ENCODE measurements at regions of chr15 and their contacts with region 1.

Region 1: DNA sequence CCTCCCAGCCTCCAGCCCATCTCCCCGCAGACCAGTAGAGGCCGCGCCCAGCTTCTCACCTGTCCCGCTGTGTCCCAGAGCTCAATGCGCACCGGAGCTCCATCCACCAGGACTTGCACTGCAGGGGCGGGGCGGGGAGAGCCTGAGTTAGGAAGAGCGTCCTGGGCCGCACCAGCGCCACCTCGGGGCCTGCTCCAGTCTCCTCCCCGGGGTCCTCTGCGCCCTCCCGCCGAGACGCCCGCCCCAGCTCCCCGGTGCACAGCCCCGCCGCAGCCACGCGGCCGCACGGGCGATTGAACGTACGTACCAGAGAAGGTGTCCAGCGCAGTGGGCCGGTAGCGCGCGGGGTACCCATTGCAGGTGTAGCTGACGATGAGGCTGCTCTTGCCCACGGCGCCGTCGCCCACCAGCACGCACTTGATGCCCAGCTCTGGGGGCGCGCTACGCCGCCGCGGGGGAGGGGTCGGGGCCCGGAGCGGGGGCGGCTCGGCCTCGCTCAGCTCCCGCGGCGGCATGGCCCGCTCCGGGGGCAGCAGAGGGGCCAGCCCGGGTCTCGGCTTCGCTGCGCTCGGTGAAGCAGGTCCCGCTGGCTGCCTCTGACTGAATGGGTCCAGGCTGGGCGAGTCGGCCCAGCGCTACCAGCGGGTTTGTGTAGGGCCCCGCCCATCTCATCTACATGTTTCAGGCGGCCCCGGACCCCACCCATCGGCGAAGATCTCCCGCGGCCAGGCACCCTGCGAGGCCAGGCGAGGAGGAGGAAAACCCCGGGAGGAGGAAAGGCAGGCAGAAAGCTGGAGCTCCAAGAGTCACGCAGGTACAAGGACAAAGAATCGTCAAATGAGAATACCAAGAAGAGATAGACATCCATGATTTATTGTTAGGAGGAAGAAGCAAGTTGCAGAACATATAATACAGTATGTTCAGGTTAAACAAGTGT is at the start of gene RHOV:
- DNase-seq: peak; percentile 89
- ATAC-seq: peak; percentile 90
- H3K4me3 ChIP-seq: peak within 1 kb of the TSS; percentile 92
- H3K27ac ChIP-seq: peak within 1 kb of the TSS; percentile 95
- H3K4me1 ChIP-seq: peaks cover 36% of the 10 kb centered on the region
- H3K27me3 ChIP-seq: no peaks in the 10 kb centered on the region
- CTCF ChIP-seq: peak; percentile 63
- total RNA-seq, gene RHOV: 39.5 and 52.2 TPM in 2 replicates

Region 2: GRCh38 chr15:40716165-40716564 is 157.7 kb before region 1 on chr15:
- CTCF ChIA-PET with region 1: no interaction called
- POLR2A ChIA-PET with region 1: no interaction called
- intact Hi-C with region 1: no loop called
- DNase-seq: no peak
- ATAC-seq: no peak
- H3K4me3 ChIP-seq: no peak overlapping the region
- H3K27ac ChIP-seq: no peak overlapping the region
- H3K4me1 ChIP-seq: no peaks in the 10 kb centered on the region
- H3K27me3 ChIP-seq: no peaks in the 10 kb centered on the region
- CTCF ChIP-seq: no peak

Region 3: GRCh38 chr15:40763801-40764732 is 109.8 kb before region 1 on chr15 and contains the start of gene GCHFR:
- CTCF ChIA-PET with region 1: interaction called, 11 read pairs
- POLR2A ChIA-PET with region 1: no interaction called
- intact Hi-C with region 1: no loop called
- DNase-seq: peak; percentile 79
- ATAC-seq: peak; percentile 76
- H3K4me3 ChIP-seq: peak within 1 kb of the TSS; percentile 63
- H3K27ac ChIP-seq: peak within 1 kb of the TSS; percentile 26
- H3K4me1 ChIP-seq: peaks cover 39% of the 10 kb centered on the region
- H3K27me3 ChIP-seq: no peaks in the 10 kb centered on the region
- CTCF ChIP-seq: peak; percentile 45; the same call in 1 of the 2 replicates
- total RNA-seq, gene GCHFR: 58.9 and 65.8 TPM in 2 replicates

Region 4: DNA sequence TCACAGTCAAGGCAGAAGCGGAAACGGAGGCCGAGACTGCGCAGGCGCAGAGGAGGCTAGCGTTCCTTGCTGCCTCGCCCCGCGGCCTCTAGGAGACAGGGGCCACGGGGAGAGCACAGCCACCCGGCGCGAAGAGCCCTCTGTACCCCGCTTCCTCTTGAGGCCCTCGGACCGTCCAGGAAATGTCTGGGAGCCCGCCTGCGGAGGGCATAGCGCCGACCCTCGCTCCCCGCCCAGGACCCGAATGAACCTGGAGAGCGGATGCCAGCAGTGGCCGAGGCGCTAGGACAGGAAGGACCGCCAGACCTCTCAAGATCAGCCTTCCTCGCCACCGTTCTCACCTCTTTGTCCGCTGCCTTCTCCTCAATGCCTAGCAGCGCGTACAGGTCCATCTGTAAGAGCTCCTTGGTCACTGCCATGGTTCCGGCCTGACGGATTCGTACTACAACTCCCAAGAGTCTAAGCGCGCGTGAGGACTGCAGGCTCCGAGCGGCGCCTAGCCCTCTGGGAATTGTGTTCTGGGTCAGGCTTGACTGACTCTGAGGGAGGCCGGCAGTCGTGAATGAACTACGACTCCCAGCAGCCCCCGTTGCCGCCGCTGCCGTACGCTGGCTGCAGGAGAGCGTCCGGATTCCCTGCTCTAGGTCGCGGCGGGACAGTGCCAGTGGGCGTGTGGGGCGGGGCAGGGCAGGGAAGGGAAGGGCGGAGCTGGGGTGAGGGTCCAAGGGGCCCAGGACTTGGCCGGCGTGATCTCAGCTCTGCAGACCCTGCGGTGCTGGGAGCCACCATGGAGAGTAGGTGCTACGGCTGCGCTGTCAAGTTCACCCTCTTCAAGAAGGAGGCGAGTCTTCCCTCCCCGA is 66.6 kb before region 1 on chr15 and contains the starts of genes DNAJC17 and ZFYVE19:
- CTCF ChIA-PET with region 1: no interaction called
- POLR2A ChIA-PET with region 1: no interaction called
- intact Hi-C with region 1: no loop called
- DNase-seq: peak; percentile 98
- ATAC-seq: peak; percentile 98
- H3K4me3 ChIP-seq: peak within 1 kb of the TSS; percentile 98
- H3K27ac ChIP-seq: peak within 1 kb of the TSS; percentile 65
- H3K4me1 ChIP-seq: peaks cover 13% of the 10 kb centered on the region
- H3K27me3 ChIP-seq: no peaks in the 10 kb centered on the region
- CTCF ChIP-seq: no peak
- total RNA-seq, gene DNAJC17: 51.2 and 53.3 TPM in 2 replicates
- total RNA-seq, gene ZFYVE19: 32.3 and 39.6 TPM in 2 replicates

Region 5: GRCh38 chr15:40863660-40864270 is 10.1 kb before region 1 on chr15:
- CTCF ChIA-PET with region 1: interaction called, 59 read pairs
- POLR2A ChIA-PET with region 1: interaction called, 5 read pairs
- intact Hi-C with region 1: no loop called
- DNase-seq: no peak
- ATAC-seq: no peak
- H3K4me3 ChIP-seq: no peak overlapping the region
- H3K27ac ChIP-seq: peak overlapping the region; percentile 95
- H3K4me1 ChIP-seq: peaks cover 44% of the 10 kb centered on the region
- H3K27me3 ChIP-seq: no peaks in the 10 kb centered on the region
- CTCF ChIP-seq: no peak